HAP-1 (cell line): ENCODE measurements at regions of chr1 and their contacts with region 1.

Region 1: GRCh38 chr1:167533851-167534300 is 15.5 kb upstream of the CD247 start:
- DNase-seq: peak; percentile 46 to 79
- H3K4me3 ChIP-seq: no peak overlapping the region
- H3K4me1 ChIP-seq: no peaks in the 10 kb centered on the region
- H3K27me3 ChIP-seq: 0 out of 2 replicates have a peak, but pooled peaks cover 2% of the 10 kb centered on the region

Region 2: DNA sequence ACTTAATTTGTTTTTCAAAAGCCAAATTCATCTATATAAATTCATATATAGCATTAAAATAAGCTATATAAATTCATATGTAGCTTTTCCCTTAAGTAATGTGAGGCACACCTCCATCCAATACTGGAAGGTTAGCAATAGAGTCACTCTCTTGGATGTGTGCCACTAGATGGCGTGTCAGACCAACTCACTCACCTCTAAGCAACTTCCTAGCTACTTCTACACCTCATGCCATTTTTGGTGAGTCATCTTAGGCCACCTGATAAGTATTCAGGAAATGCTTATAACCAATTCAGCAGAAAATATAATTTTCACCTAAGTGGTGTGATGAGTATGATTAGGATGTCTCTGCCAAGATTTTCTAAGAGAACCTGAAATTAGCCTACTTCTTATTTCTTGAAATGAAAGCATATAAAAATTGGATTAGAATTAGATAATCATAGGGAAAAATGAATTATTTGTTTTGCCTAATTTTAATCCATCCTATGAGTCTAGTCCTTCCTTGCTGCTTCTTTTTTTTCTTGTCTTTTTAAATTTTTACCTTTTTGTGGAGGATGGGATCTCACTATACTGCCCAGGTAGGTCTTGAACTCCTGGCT is 623.4 kb before region 1 on chr1:
- in situ Hi-C with region 1: loop called (anchors 25 kb)
- DNase-seq: peak; percentile 74 to 77
- H3K4me3 ChIP-seq: no peak overlapping the region
- H3K4me1 ChIP-seq: no peaks in the 10 kb centered on the region
- H3K27me3 ChIP-seq: peaks cover 16% of the 10 kb centered on the region

Region 3: GRCh38 chr1:167066333-167067122 is 467.3 kb before region 1 on chr1:
- in situ Hi-C with region 1: loop called (anchors 10 kb)
- DNase-seq: peak; percentile 52 to 88
- H3K4me3 ChIP-seq: no peak overlapping the region
- H3K4me1 ChIP-seq: no peaks in the 10 kb centered on the region
- H3K27me3 ChIP-seq: peaks cover 3% of the 10 kb centered on the region; the same call in 1 of the 2 replicates

Region 4: DNA sequence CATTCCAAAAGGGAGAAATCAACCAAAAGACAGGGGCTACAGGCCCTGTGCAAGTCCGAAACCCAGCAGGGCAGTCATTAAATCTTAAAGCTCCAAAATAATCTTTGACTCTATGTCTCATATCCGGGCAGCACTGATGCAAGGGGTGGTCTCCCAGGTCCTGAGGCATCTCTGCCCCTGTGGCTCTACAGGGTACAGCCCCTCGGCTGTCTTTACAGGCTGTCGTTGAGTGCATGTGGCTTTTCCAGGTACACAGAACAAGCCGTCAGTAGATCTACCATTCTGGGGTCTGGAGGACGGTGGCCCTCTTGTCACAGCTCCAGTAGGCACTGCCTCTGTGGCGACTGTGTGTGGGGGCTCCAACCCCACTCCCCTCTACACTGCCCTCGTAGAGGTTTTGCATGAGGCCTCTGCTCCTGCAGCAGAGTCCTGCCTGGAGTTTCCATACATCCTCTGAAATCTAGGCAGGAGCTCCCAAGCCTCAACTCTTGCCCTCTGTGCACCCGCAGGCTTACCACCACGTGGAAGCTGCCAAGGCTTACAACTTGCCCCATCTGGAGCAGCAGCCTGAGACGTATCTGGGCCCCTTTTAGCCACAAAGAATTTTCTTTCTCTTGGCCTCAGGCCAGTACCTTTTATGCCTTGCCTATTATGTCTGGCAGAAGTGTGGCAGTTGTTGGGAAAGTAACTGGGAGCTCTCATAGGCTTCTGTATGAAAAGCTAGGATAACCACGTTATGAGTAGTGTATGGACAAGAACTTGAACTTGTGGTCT is 260.7 kb before region 1 on chr1:
- in situ Hi-C with region 1: loop called (anchors 25 kb)
- DNase-seq: peak; percentile 59 to 60
- H3K4me3 ChIP-seq: no peak overlapping the region
- H3K4me1 ChIP-seq: peaks cover 13% of the 10 kb centered on the region
- H3K27me3 ChIP-seq: no peaks in the 10 kb centered on the region

Region 5: DNA sequence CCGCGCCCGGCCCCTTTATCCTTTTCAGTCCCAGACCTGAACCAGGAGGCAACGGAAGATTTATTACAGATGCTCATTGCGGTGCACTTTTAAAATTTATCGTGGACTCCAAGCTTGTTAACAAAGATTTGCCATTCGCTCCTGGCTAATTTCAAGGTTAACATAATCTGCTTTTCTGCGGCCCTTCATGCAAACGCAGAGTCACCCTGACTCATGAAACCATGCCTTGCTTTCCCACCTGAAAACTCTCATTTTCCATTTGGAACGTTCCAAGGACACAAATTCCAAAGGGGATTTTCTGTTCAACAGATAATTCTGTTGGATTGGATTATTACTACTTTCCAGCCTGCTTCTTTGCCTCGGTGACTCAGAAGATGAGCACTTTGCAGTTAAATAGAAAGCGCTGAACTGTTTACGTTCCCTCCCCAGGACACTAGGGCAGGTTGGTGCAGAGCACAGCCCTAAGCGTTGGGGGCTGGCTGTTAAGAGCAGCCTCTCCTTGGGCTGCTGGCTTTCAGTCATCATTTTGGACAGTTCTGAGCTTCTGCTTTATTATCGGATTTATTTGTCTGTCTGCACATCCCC is 66.7 kb before region 1 on chr1:
- in situ Hi-C with region 1: loop called (anchors 10 kb)
- DNase-seq: peak; percentile 24 to 25
- H3K4me3 ChIP-seq: no peak overlapping the region
- H3K4me1 ChIP-seq: peaks cover 8% of the 10 kb centered on the region
- H3K27me3 ChIP-seq: no peaks in the 10 kb centered on the region

Region 6: DNA sequence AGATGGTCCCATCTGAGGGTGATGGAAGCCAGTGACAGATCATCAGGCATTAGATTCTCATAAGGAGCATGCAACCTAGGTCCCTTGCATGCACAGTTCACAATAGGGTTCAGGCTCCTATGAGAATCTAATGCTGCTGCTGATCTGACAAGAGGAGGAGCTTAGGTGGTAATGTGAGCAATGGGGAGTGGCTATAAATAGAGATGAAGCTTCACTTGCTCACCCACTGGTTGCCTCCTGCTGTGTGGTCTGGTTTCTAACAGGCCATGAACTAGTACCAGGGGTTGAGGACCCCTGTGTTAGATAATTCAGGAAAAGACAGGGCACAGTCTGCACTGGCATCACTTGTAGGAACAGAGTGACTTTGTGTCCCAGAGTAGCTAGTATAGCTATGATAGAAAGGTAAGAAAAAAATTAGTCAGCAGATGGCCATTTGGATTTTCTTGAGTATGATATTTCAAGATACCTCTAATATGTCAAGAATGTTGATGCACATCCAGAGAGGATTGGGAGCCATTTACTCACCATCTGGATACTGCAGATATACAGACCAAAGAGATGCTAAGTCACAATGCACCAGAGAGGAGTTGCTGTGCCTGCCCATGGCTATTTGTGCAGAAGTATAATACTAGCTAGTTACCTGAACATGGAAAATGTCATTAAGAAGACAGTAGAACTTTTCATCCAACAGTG is 326.5 kb after region 1 on chr1:
- in situ Hi-C with region 1: no loop called
- DNase-seq: no peak
- H3K4me3 ChIP-seq: no peak overlapping the region
- H3K4me1 ChIP-seq: peaks cover 5% of the 10 kb centered on the region
- H3K27me3 ChIP-seq: no peaks in the 10 kb centered on the region